ENCODE measurements at regions of chr4 and their contacts with region 1.

Region 1: DNA sequence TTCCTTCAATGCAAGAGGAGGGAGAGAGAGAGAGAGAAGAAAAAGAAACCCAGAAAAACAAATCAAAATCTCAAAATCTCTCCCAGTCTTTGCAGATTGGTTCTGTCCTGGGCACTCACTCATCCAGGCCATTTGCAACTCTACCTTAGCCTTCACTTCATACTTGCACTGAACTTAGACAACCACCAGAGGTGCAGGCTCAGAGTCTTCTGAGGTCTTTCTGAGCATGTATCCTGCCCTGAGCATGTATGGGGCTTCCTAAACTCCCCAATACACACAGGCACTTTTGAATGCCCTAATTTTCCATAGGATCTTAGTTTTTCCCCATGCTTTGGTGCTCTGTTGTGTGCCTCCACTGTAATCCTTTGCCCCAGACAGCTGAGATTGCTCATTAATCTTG is 2.9 kb downstream of the CFI start:
- DNase-seq: no peak
- ATAC-seq: no peak
- H3K4me3 ChIP-seq: no peak overlapping the region
- H3K27ac ChIP-seq: no peak overlapping the region
- H3K4me1 ChIP-seq: peaks cover 0 to 7% (median 0%) of the 10 kb centered on the region in 12 donors
- H3K27me3 ChIP-seq: no peaks in the 10 kb centered on the region
- CTCF ChIP-seq: no peak
- POLR2A ChIP-seq: no peak

Region 2: GRCh38 chr4:109749388-109750082 is 49.3 kb before region 1 on chr4:
- intact Hi-C with region 1: loop called in 1 of 10 experiments (anchors 10 kb)
- DNase-seq: no peak
- ATAC-seq: no peak
- H3K4me3 ChIP-seq: no peak overlapping the region
- H3K27ac ChIP-seq: no peak overlapping the region
- H3K4me1 ChIP-seq: no peaks in the 10 kb centered on the region
- H3K27me3 ChIP-seq: no peaks in the 10 kb centered on the region
- CTCF ChIP-seq: no peak
- POLR2A ChIP-seq: no peak

Region 3: GRCh38 chr4:110364911-110365520 is 566.1 kb after region 1 on chr4:
- intact Hi-C with region 1: no loop called
- DNase-seq: peak in 3 of 5 donors; percentile 33 to 44 (median 43)
- ATAC-seq: peak; percentile 50 to 90 (median 70)
- H3K4me3 ChIP-seq: no peak overlapping the region
- H3K27ac ChIP-seq: peak overlapping the region in 11 of 12 donors; percentile 14 to 76 (median 49)
- H3K4me1 ChIP-seq: peaks cover 0 to 8% (median 0%) of the 10 kb centered on the region in 12 donors
- H3K27me3 ChIP-seq: peaks cover 0 to 3% (median 0%) of the 10 kb centered on the region in 9 donors
- CTCF ChIP-seq: no peak
- POLR2A ChIP-seq: no peak

Measured in heart left ventricle (tissue), 16 donors.